ENCODE measurements at regions of chr2 and their contacts with region 1.

Region 1: GRCh38 chr2:64653349-64654062 is at the start of gene SERTAD2:
- DNase-seq: peak; percentile 89 to 95
- ATAC-seq: peak; percentile 83 to 89 (median 86)
- H3K4me3 ChIP-seq: peak within 1 kb of the TSS; percentile 82
- H3K27ac ChIP-seq: peak within 1 kb of the TSS; percentile 98
- H3K4me1 ChIP-seq: peaks cover 40% of the 10 kb centered on the region
- H3K27me3 ChIP-seq: no peaks in the 10 kb centered on the region
- CTCF ChIP-seq: no peak
- total RNA-seq, gene SERTAD2: 10.3 to 13.2 (median 11.5) TPM

Region 2: GRCh38 chr2:64008434-64009009 is 645.0 kb before region 1 on chr2:
- intact Hi-C with region 1: loop called in 1 of 2 experiments (anchors 5 kb)
- DNase-seq: no peak
- ATAC-seq: peak in 3 of 4 donors; percentile 25 to 53 (median 33)
- H3K4me3 ChIP-seq: no peak overlapping the region
- H3K27ac ChIP-seq: no peak overlapping the region
- H3K4me1 ChIP-seq: peaks cover 12% of the 10 kb centered on the region
- H3K27me3 ChIP-seq: no peaks in the 10 kb centered on the region
- CTCF ChIP-seq: no peak

Region 3: GRCh38 chr2:64523666-64524603 is 129.6 kb before region 1 on chr2 and contains the start of gene AFTPH:
- intact Hi-C with region 1: loop called in 1 of 2 experiments (anchors 5 kb)
- DNase-seq: peak; percentile 99
- ATAC-seq: peak; percentile 99 to 100 (median 100)
- H3K4me3 ChIP-seq: peak within 1 kb of the TSS; percentile 97
- H3K27ac ChIP-seq: peak within 1 kb of the TSS; percentile 97
- H3K4me1 ChIP-seq: peaks cover 20% of the 10 kb centered on the region
- H3K27me3 ChIP-seq: no peaks in the 10 kb centered on the region
- CTCF ChIP-seq: peak; percentile 10
- total RNA-seq, gene AFTPH: 12.2 to 15.6 (median 13.0) TPM

Region 4: DNA sequence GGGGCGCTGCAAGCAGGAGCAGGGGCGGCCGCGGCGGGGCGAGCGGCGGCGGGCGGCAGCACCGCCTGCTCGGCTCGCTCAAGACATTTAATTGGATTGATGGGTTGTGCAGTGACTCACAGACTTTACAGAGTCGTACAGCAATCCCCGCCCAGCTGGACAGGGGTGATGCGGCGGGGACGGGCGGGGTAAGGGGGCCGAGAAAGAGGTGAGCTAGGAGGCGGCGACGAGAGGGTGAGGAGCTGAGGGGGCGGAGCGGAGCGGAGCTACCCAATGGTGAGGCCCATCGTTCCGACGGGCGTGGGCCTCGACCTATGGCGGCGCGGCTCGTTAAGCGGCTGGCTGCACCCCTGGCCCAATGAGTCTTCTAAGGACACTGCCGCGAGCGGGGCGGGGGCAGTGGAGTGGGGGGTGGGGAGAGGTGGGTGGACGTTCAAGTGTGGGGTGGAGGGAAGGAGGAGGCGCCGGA is 97.3 kb after region 1 on chr2:
- intact Hi-C with region 1: loop called (anchors 2 to 5 kb)
- DNase-seq: peak; percentile 100
- ATAC-seq: peak; percentile 88 to 92 (median 88)
- H3K4me3 ChIP-seq: peak overlapping the region; percentile 70
- H3K27ac ChIP-seq: peak overlapping the region; percentile 92
- H3K4me1 ChIP-seq: peaks cover 11% of the 10 kb centered on the region
- H3K27me3 ChIP-seq: no peaks in the 10 kb centered on the region
- CTCF ChIP-seq: no peak

Region 5: DNA sequence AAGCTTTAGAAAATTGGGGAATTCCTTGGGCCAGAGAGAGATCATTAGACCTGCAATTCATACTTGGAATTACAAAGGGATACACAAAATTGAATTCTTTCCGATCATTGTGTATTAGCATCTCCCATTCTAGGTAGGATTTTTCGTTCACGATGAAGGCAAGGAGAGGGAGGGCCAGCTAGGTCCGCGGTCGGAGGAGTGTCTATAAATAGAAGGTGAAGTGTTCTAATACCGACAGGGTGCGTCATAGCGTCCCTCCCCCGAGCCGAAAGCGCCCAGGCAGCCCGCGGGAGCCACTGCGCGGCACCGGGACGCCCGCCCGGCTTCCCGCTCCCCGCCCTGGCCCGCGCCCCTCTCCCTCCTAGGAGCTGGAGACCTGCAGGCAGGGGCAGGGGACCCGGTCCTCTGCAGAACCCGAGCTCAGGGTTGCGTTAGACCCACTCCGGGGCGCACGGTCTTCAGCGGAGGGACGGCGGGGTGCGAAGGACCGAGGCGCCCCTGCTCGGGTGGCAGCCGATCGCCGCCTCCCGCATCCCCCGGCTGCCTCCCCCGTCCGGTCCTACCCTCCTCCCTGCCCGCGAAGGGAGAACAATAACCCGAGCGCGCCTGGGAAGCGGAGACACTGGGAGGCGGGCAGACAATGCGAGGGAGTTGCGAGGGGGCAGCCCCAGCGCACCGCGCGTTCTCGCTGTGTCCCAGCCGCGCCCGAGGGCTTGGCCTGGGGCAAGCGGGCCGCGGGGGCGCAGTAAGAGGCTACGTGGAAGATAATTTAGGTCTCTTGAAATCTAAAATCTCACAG is 114.4 kb after region 1 on chr2:
- intact Hi-C with region 1: loop called in 1 of 2 experiments (anchors 5 kb)
- DNase-seq: peak; percentile 88 to 92
- ATAC-seq: peak; percentile 98
- H3K4me3 ChIP-seq: peak overlapping the region; percentile 80
- H3K27ac ChIP-seq: peak overlapping the region; percentile 98
- H3K4me1 ChIP-seq: peaks cover 3% of the 10 kb centered on the region
- H3K27me3 ChIP-seq: no peaks in the 10 kb centered on the region
- CTCF ChIP-seq: no peak

Region 6: DNA sequence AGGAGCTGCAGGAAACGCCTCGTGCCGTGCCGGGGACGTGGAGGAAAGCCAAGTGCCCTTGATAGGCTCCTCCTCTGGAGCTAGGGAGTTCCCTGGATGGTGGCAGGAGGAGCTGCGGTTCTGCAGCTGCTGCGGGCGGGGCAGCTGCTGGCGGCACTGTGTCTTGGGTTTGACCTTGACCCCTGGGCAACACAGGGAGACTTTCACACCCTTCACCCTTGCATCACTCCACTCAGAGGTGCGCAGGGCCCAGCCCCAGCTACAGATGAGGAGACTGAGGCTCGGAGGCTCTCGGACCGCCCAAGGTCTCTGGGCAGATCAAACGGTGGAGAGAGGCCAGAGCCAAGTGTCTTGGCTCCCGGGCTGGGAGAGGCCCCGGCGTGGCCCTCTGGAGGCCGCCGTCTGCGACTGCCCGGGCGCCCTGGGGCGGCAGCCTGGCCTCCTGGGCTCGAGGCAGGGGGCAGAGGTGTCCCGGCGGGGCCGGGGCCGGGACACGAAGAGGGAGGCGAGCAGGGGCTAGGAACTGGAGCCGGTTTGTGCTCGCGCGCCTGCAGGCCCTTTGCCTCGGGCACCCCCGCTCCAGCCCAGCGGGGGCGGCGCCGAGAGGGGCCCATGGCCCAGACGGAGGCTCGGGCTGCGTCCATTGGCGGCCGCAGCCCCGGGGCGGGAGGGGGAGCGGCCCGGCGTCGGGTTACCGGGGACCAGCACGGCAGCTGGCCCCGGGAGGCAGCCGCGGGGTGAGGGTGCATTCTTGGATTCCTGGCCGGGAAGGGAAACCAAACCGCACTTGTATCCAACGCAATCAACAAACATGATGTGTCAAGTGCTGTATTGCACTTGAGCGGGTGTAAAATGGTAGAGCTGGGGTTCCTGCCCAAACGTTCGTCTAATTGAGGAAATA is 206.1 kb after region 1 on chr2:
- intact Hi-C with region 1: loop called in 1 of 2 experiments (anchors 2 kb)
- DNase-seq: peak; percentile 92 to 95
- ATAC-seq: peak; percentile 84 to 89 (median 88)
- H3K4me3 ChIP-seq: peak overlapping the region; percentile 65
- H3K27ac ChIP-seq: peak overlapping the region; percentile 93
- H3K4me1 ChIP-seq: peaks cover 45% of the 10 kb centered on the region
- H3K27me3 ChIP-seq: no peaks in the 10 kb centered on the region
- CTCF ChIP-seq: peak; percentile 15

Region 7: GRCh38 chr2:64865073-64865830 is 211.7 kb after region 1 on chr2:
- intact Hi-C with region 1: loop called in 1 of 2 experiments (anchors 2 kb)
- DNase-seq: peak; percentile 67 to 79
- ATAC-seq: peak; percentile 89 to 92 (median 90)
- H3K4me3 ChIP-seq: peak overlapping the region; percentile 79
- H3K27ac ChIP-seq: peak overlapping the region; percentile 81
- H3K4me1 ChIP-seq: peaks cover 8% of the 10 kb centered on the region
- H3K27me3 ChIP-seq: no peaks in the 10 kb centered on the region
- CTCF ChIP-seq: peak; percentile 99

Region 8: DNA sequence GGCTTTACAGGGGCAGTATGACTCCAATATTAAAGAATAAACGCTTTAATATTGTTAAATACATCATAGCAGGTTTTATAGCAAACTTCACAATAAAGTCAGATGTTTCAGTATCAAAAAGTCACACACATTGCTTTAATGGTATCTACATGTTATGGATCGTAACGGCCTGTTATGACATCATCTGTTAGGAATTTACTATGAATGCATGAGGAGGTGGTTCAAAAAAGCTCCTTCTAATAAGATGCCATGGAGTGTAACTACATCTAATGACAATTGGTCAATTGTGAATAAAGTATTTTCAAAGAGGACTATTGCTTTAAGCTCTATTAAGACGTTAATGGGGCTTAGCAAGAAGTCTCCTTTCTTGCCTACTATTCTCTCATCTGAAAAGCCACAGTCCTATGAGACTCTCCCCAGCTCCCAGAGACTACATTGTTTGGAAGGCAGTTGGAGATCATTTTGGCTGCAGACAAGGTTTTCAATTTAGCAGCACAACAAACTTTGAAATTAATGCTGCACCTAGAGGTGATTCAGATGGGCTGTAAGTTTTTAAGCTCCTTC is 1480.7 kb after region 1 on chr2:
- intact Hi-C with region 1: no loop called
- DNase-seq: no peak
- ATAC-seq: no peak
- H3K4me3 ChIP-seq: no peak overlapping the region
- H3K27ac ChIP-seq: no peak overlapping the region
- H3K4me1 ChIP-seq: no peaks in the 10 kb centered on the region
- H3K27me3 ChIP-seq: no peaks in the 10 kb centered on the region
- CTCF ChIP-seq: no peak